ENCODE measurements at regions of chr1 and their contacts with region 1.

Region 1: DNA sequence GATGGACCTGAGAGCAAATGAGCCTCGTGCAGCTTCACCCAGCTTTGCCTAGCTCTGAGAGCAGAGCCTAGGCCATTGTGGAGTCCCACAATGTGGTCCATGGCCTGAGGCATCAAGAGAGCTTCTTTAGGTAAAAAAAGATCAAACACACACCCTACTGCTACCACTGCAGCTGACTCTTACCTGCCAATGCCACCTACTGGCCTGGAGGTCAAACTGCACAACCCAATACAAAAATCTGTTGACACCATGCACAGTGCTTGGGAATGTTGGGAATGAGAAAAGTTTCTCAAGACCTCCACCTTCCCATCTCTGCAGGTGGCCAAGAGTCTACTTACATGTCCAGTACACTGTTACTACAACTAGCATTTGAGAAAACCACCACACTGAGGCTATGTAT is 60.6 kb downstream of the UCHL5 start:
- DNase-seq: no peak
- H3K27ac ChIP-seq: no peak overlapping the region
- CTCF ChIP-seq: no peak

Region 2: DNA sequence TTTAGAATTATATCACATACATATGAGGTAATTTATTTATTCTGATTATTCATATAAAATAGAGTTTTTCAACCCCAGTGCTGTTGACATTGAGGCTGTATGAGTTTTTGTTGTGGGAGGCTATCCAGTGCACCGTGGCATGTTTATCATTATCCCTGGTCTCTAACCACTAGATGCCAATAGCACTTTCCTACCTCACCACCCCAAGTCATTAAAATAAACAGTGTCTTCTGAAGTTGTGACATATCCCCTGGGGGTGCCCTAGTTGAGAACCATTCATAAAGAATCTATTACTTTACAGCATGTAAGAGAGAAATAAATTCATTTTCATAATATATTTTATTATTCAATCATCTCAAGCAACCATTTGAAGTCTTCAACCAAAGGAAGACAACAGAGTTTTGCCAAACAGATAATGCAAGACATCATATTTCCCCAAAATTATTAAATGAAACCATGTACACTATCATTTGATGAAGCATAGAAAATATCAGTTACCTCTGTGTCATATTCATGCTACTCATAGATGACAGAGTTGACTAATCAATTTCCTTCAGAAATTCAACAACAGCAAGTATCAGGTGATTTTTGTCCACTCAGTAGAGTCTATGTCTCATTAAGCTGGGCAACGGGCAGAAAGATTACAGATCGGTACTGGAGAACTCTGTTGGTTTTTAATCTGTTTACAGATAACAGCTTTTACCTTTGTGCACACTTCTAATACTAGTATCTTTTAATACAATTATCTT is 462.4 kb before region 1 on chr1:
- CTCF ChIA-PET with region 1: interaction called, 11 read pairs
- POLR2A ChIA-PET with region 1: no interaction called
- DNase-seq: no peak
- H3K27ac ChIP-seq: no peak overlapping the region
- CTCF ChIP-seq: no peak

Region 3: DNA sequence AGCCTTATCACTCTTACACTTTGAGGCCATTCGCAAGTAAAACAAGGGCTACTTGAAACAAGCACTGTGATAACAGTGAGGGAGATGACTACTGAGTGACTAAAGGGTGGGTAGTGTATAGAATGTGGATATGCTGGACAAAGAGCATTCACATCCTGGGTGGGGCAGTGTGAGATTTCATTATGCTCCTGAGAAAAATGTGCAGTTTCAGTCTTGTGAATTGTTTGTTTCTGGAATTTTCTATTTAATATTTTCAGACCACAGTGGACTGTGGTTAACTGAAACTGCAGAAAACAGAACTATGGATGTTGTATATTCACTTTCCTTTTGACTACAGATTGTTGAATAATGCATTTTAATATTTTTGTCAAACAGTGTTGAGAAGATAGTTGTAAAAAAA is 213.0 kb after region 1 on chr1:
- CTCF ChIA-PET with region 1: no interaction called
- POLR2A ChIA-PET with region 1: no interaction called
- DNase-seq: peak; percentile 90
- H3K27ac ChIP-seq: no peak overlapping the region
- CTCF ChIP-seq: no peak